AG04450 (cell line): ENCODE measurements at regions of chr6 and their contacts with region 1.

Region 1: GRCh38 chr6:125314019-125314581 is 12.3 kb upstream of the HDDC2 start:
- DNase-seq: peak; percentile 23
- H3K4me3 ChIP-seq: no peak overlapping the region
- H3K27ac ChIP-seq: no peak overlapping the region
- H3K27me3 ChIP-seq: peaks cover 2% of the 10 kb centered on the region
- CTCF ChIP-seq: peak; percentile 83

Region 2: DNA sequence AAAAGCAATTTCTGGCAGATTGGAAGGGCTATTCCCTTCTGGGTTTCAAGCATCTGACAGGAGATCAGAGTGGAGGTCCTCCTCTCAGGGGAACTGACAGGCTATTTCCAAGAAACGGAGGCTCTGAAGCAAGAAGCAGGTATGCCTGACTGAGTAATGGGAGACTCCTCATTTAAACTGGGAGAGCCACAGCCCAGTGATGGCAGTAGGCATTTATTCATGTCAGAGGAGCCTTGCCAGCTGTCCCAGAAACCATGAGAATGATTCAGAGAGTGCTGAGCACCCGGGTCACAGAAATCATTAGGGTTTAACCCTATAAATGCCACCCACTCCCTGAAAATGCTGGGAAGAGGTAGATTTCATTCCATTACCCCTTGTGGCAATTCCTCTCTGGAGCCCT is 599.4 kb before region 1 on chr6:
- CTCF ChIA-PET with region 1: no interaction called
- POLR2A ChIA-PET with region 1: no interaction called
- DNase-seq: no peak
- H3K4me3 ChIP-seq: no peak overlapping the region
- H3K27ac ChIP-seq: no peak overlapping the region
- H3K27me3 ChIP-seq: no peaks in the 10 kb centered on the region
- CTCF ChIP-seq: no peak

Region 3: GRCh38 chr6:124870611-124871459 is 443.3 kb before region 1 on chr6:
- CTCF ChIA-PET with region 1: interaction called, 18 read pairs
- POLR2A ChIA-PET with region 1: no interaction called
- DNase-seq: peak; percentile 16
- H3K4me3 ChIP-seq: no peak overlapping the region
- H3K27ac ChIP-seq: no peak overlapping the region
- H3K27me3 ChIP-seq: no peaks in the 10 kb centered on the region
- CTCF ChIP-seq: peak; percentile 68

Region 4: DNA sequence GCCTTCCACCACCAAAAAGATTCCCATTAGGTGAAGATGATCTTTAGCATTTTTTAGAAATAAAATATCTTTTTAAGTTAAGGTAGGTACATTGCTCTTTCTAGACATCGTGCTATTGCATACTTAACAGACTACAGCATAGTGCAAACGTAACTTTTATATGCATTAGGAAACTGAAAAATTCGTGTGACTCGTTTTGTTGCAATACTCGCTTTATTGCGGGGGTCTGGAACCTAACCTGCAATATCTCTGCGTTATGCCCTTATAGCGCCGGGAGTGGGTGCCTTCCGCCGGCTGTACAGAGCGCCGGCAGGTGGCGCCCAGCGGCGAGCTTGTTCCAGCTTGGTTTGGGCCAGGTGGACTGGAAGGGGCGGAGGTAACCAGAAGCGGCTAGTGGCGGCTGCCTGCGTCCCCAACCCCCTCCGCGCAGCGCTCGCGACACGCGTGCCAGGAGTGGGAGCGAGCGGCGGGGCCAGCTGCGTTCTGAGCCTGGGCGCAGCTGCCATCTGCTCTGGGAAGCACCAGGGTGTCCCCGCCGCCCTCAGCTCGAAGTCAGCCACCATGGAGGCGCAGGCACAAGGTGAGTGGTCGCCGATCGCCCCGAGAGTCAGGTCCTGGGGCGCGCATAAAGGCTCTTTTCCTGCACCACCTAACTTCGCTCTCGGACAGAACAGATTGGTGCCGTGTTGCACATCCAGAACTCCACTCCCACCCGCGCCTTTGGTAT is 160.5 kb before region 1 on chr6 and contains the start of gene TPD52L1:
- CTCF ChIA-PET with region 1: interaction called, 12 read pairs
- POLR2A ChIA-PET with region 1: no interaction called
- DNase-seq: no peak
- H3K4me3 ChIP-seq: peak within 1 kb of the TSS; percentile 70
- H3K27ac ChIP-seq: no peak within 1 kb of the TSS
- H3K27me3 ChIP-seq: peaks cover 3% of the 10 kb centered on the region
- CTCF ChIP-seq: peak; percentile 94
- polyA plus RNA-seq, gene TPD52L1: 10.9 and 11.1 TPM in 2 replicates

Region 5: DNA sequence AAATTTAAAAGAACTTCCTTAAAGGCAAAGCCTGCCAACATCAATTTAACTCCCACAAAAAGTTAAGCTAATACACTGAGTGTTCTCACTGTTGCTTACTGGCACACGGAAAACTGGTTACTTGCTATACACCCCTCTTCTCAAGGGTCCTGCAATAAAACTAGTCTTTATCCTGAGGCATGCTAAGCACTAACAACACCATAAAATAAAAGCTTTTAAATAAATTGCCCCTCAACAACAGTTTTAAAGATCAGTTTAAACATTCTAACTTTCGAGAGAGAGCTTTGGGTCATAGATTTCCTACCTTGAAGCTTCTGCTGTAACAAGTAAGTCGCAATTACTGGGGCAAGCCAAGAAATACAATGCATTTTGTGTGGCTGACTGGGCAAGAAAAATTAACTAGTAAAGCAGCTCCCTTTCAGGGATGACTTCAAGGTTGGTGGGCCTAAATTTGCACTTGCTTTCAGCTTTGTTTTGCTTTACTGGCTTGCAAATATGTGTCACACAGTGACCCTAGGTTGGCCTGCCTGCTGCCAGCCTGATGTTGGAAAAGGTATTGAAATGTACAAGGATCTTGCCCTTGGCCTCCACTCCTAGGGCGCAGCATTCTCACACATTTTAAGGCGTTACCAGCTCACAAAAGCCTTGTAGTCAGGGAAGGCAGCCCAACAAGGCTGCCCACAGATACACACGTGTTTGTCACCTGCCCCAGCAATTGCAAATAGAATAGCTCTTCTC is 431.4 kb after region 1 on chr6:
- CTCF ChIA-PET with region 1: interaction called, 27 read pairs
- POLR2A ChIA-PET with region 1: no interaction called
- DNase-seq: no peak
- H3K4me3 ChIP-seq: no peak overlapping the region
- H3K27ac ChIP-seq: no peak overlapping the region
- H3K27me3 ChIP-seq: peaks cover 47% of the 10 kb centered on the region
- CTCF ChIP-seq: no peak

Region 6: DNA sequence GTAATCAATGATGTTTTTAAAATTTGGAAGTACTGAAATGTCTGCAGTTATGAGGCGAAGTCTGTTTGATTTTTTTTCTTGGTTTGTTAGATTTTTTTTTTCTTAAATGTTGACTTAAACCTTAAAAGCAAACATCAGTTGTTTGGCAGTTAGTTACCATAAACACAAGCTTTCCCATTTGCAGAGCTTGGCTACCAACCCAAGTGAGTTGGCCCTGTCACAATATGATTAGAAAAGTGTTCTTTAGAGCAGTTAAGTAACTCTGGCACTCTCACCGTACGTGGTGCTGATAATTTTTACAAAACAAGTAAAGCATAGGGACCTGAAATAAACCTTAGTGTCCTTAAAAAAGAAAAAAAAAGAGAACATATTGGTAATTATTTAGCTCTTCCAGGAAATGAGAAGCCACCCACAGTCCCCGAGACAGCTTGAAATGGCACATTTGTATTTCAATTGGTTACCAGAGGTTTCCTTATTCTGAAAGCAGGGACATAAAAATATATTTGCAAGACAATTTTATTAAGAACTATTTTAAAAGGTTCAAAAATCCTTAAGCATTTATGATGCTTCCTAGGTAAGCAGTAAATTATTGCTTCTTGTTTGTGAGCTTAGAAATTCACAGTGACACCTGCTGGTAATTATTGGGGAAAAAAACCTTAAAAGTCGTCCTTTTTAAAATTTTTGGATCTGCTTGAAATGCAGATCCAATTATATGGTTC is 439.3 kb after region 1 on chr6:
- CTCF ChIA-PET with region 1: interaction called, 63 read pairs
- POLR2A ChIA-PET with region 1: no interaction called
- DNase-seq: no peak
- H3K4me3 ChIP-seq: no peak overlapping the region
- H3K27ac ChIP-seq: no peak overlapping the region
- H3K27me3 ChIP-seq: peaks cover 31% of the 10 kb centered on the region
- CTCF ChIP-seq: peak; percentile 46

Region 7: GRCh38 chr6:125759184-125759902 is 445.2 kb after region 1 on chr6:
- CTCF ChIA-PET with region 1: interaction called, 137 read pairs
- POLR2A ChIA-PET with region 1: no interaction called
- DNase-seq: no peak
- H3K4me3 ChIP-seq: no peak overlapping the region
- H3K27ac ChIP-seq: no peak overlapping the region
- H3K27me3 ChIP-seq: peaks cover 17% of the 10 kb centered on the region
- CTCF ChIP-seq: no peak